Activated CD4-positive, alpha-beta T cell treated with anti-CD3 and anti-CD28 coated beads for 36 hours (primary cell): ENCODE measurements at regions of chrX and their contacts with region 1.

Region 1: GRCh38 chrX:150772150-150772970 is 79.2 kb downstream of the MTMR1 start:
- DNase-seq: peak; percentile 87
- ATAC-seq: peak; percentile 82
- H3K4me3 Mint-ChIP-seq: no peak overlapping the region
- H3K27ac Mint-ChIP-seq: no peak overlapping the region
- H3K4me1 Mint-ChIP-seq: peaks cover 6% of the 10 kb centered on the region
- H3K27me3 Mint-ChIP-seq: no peaks in the 10 kb centered on the region

Region 2: DNA sequence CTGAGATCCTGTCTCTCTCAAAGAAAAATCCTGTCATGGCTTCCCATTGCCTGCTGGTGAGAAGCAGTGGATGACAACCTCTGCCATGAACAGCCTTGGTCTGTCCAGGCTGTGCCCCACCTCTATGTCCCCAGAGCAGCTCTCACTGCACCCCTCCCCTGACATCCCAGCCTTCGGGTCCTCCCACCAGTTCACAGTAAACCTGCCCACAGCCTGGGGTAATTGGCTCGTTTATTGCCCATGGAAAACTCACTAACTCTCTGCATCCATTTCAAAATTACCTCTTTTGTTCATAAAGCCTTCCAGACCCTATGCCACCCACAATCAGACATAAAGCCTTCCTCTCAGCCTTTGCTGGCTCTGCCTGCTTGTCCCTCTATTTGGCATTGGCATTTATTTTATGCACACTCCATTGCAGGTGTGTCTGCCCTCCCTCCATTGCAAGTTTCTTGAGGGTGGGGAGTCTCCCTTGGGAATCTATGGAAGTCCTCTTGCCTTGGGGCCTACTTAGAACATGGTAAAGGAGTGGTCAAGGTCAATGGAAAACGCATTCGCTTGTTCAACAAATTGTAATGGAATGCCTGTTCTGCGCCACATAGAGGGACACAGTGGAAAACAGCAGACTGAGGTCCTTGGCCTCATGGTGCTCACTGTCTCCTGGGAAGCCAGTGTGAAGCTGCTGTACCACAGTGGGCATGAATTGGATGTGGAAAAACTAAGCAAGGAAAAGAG is 200.3 kb after region 1 on chrX:
- CTCF ChIA-PET with region 1: no interaction called
- POLR2A ChIA-PET with region 1: no interaction called
- intact Hi-C with region 1: no loop called
- DNase-seq: no peak
- ATAC-seq: no peak
- H3K4me3 Mint-ChIP-seq: no peak overlapping the region
- H3K27ac Mint-ChIP-seq: no peak overlapping the region
- H3K4me1 Mint-ChIP-seq: no peaks in the 10 kb centered on the region
- H3K27me3 Mint-ChIP-seq: peaks cover 3% of the 10 kb centered on the region

Region 3: GRCh38 chrX:150982788-150983520 is 210.6 kb after region 1 on chrX and contains the start of gene HMGB3:
- CTCF ChIA-PET with region 1: interaction called, 6 read pairs
- POLR2A ChIA-PET with region 1: no interaction called
- intact Hi-C with region 1: loop called in 1 of 2 experiments (anchors 5 kb)
- DNase-seq: peak; percentile 91
- ATAC-seq: peak; percentile 99
- H3K4me3 Mint-ChIP-seq: peak within 1 kb of the TSS; percentile 66
- H3K27ac Mint-ChIP-seq: no peak within 1 kb of the TSS
- H3K4me1 Mint-ChIP-seq: peaks cover 4% of the 10 kb centered on the region
- H3K27me3 Mint-ChIP-seq: peaks cover 16% of the 10 kb centered on the region
- total RNA-seq, gene HMGB3: 26.5 to 29.3 TPM

Region 4: DNA sequence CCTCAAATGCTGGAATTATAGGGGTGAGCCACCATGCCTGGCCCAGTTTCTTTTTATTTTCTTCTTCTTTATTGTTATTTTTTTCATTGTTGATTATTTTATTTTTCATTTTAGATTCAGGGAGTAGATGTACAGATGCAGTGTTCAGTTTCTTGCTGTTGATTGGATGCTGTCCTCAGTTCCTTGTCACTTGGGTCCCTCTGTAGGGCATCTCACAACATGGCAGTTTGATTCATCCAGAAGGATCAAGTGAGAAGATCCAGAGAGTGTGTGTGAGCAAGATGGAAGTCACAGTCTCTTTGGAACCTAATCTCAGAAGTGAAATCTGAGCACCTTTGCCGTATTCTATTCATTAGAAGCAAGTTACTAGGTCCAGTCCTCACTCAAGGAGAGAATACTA is 231.7 kb after region 1 on chrX:
- CTCF ChIA-PET with region 1: no interaction called
- POLR2A ChIA-PET with region 1: no interaction called
- intact Hi-C with region 1: loop called (anchors 1 to 5 kb)
- DNase-seq: no peak
- ATAC-seq: no peak
- H3K4me3 Mint-ChIP-seq: no peak overlapping the region
- H3K27ac Mint-ChIP-seq: no peak overlapping the region
- H3K4me1 Mint-ChIP-seq: no peaks in the 10 kb centered on the region
- H3K27me3 Mint-ChIP-seq: peaks cover 3% of the 10 kb centered on the region

Region 5: DNA sequence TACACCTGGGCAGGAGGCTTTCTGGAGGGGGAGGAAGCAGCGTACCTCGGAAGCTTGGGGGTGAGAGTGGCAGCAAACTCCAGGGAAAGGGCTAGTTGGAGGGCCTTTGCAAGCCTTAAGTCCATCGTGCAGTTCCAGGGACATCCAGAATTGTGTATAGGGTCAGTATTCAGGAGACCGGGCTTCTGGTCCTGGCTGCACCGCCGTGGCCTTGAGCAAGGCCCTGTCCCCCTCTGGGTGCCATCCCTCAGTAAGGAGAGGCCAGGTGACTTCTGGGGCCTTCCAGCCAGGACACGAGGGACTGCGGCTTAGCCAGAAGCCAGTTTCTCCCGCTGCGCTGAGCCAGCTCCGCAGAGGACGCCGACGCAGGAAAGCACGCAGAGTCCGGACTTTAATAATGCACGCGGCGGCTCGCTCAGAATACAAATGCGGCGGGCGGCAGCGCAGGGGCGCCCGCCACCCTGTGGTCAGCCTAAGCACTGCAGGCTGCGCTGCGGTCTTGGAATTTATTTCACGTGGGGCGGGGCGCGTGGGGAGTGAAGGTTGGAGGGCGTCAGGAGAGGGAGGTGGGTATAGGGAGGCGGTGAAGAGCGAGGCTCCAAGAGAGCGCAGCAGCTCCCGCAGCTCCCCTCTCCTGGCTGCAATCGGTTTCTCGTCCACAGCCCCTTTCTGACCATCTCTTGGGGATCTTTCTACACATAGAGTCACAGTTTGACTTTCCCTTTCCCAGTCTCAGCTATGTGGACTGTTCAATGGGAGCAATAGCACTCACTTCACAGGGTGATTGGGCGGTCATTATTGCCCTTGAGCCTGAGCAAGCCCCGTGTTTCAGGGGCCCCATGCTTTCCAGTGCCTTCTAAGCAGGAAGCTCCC is 310.0 kb after region 1 on chrX:
- CTCF ChIA-PET with region 1: interaction called, 49 read pairs
- POLR2A ChIA-PET with region 1: no interaction called
- intact Hi-C with region 1: loop called (anchors 1 kb)
- DNase-seq: peak; percentile 74
- ATAC-seq: peak; percentile 76
- H3K4me3 Mint-ChIP-seq: no peak overlapping the region
- H3K27ac Mint-ChIP-seq: no peak overlapping the region
- H3K4me1 Mint-ChIP-seq: no peaks in the 10 kb centered on the region
- H3K27me3 Mint-ChIP-seq: peaks cover 19% of the 10 kb centered on the region